Stomach (tissue), 19 donors: ENCODE measurements at regions of chr20 and their contacts with region 1.

Region 1: DNA sequence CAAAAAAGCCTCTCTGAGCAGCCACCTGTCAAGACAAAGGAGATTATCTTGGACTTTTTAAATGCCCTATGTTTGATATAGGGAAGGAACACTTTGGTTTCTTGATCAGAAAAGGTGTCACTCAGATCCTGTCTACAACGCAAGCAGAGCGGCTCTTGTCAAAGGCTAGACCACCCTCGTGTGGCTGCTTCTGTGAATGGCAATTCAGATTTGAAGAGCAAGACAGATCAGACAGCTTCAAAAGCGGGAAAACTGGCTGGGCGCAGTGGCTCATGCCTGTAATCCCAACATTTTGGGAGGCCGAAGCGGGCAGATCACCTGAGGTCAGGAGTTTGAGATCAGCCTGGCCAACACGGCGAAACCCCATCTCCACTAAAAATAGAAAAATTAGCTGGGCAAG is 10.1 kb upstream of the NXT1 start:
- DNase-seq: peak; percentile 67 to 86
- H3K4me3 ChIP-seq: no peak overlapping the region
- H3K27ac ChIP-seq: no peak overlapping the region
- H3K4me1 ChIP-seq: peaks cover 0 to 5% (median 0%) of the 10 kb centered on the region in 4 donors
- H3K27me3 ChIP-seq: peaks cover 0 to 5% (median 0%) of the 10 kb centered on the region in 3 donors
- CTCF ChIP-seq: peak in 5 of 7 experiments; percentile 33 to 59 (median 48)
- EP300 ChIP-seq: no peak
- POLR2A ChIP-seq: no peak

Region 2: DNA sequence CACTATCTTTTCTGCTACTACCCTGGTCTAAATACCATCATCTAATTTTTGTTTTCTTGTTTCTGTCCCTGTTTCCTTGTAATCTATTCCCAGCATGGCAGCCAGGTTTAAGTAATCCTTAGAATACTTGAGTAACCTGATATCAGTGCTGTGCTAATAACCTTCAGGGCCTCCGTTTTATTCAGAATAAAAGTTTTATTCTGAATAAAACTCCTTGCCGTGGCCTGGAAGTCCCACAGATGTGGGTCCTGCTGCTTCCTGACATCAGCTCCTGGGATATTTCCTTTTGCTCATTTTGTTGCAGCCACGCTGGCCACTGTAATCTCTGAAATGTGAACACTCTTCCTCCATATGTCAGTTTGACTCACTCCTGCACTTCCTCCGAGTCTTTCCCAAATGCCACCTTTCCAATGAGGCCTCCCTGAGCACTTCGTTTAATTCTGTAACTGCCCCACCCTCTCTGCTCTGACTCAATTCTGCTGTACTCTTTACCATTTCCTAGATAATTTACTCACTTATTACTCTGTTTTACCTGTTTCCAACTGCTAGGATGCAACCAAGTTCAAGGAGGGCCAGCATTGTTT is 642.2 kb before region 1 on chr20:
- intact Hi-C with region 1: loop called (anchors 5 kb)
- DNase-seq: no peak
- H3K4me3 ChIP-seq: no peak overlapping the region
- H3K27ac ChIP-seq: no peak overlapping the region
- H3K4me1 ChIP-seq: no peaks in the 10 kb centered on the region
- H3K27me3 ChIP-seq: no peaks in the 10 kb centered on the region
- CTCF ChIP-seq: no peak
- EP300 ChIP-seq: no peak
- POLR2A ChIP-seq: no peak

Region 3: GRCh38 chr20:23048283-23049200 is 292.0 kb before region 1 on chr20:
- intact Hi-C with region 1: loop called (anchors 5 kb)
- DNase-seq: peak; percentile 79 to 81
- H3K4me3 ChIP-seq: peak overlapping the region; percentile 53 to 66 (median 64)
- H3K27ac ChIP-seq: peak overlapping the region; percentile 78 to 93 (median 85)
- H3K4me1 ChIP-seq: peaks cover 38 to 76% (median 57%) of the 10 kb centered on the region in 4 donors
- H3K27me3 ChIP-seq: peaks cover 0 to 66% (median 6%) of the 10 kb centered on the region in 3 donors
- CTCF ChIP-seq: peak in 5 of 7 experiments; percentile 32 to 72 (median 40)
- EP300 ChIP-seq: no peak
- POLR2A ChIP-seq: no peak